AG04449 (cell line): ENCODE measurements at regions of chr1 and their contacts with region 1.

Region 1: GRCh38 chr1:238951809-238952208 is 434.6 kb upstream of the CHRM3 start:
- DNase-seq: no peak
- H3K4me3 ChIP-seq: no peak overlapping the region
- CTCF ChIP-seq: peak; percentile 28

Region 2: GRCh38 chr1:237811633-237812032 is 1140.2 kb before region 1 on chr1:
- CTCF ChIA-PET with region 1: interaction called, 20 read pairs
- POLR2A ChIA-PET with region 1: no interaction called
- DNase-seq: no peak
- H3K4me3 ChIP-seq: no peak overlapping the region
- CTCF ChIP-seq: no peak

Region 3: DNA sequence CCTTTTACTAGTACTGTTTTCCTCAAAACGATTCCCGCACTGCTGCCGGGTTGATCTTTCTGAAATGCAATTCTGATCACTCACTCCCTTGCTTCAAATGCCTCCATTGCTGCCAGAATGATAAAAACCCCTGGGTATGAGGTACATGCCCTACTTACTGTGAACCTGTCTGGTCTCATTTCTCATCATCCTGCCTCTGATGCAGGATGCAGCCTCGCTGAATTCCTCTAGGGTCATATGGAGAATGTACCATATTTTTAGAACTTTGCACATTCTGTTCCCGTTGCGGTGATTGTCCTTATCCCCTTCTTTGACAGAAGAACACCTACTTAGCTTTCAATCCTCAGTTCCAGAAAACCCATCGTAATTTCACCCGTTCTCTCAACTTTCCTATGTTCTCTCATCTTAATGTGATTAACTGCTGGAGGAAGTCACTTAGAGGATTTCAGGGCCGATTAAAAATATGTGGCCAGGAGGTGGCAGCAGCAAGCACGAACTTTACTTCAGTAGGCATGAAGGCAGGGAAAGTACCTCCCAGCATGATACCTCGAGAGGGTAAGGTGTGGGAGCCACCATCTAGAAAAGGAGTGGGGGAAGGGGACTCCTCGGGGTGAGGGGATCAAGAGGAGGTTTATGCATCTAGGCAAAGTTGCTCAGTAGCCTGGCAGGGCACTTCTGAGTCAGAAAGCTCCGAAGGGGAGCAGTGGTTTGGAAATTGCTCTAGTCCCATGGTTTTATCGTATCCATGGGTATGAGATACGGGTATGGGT is 699.6 kb before region 1 on chr1:
- CTCF ChIA-PET with region 1: interaction called, 13 read pairs
- POLR2A ChIA-PET with region 1: no interaction called
- DNase-seq: peak; percentile 5
- H3K4me3 ChIP-seq: no peak overlapping the region
- CTCF ChIP-seq: peak; percentile 36

Region 4: GRCh38 chr1:238861342-238862066 is 90.3 kb before region 1 on chr1:
- CTCF ChIA-PET with region 1: no interaction called
- POLR2A ChIA-PET with region 1: no interaction called
- DNase-seq: no peak
- H3K4me3 ChIP-seq: no peak overlapping the region
- CTCF ChIP-seq: no peak

Region 5: DNA sequence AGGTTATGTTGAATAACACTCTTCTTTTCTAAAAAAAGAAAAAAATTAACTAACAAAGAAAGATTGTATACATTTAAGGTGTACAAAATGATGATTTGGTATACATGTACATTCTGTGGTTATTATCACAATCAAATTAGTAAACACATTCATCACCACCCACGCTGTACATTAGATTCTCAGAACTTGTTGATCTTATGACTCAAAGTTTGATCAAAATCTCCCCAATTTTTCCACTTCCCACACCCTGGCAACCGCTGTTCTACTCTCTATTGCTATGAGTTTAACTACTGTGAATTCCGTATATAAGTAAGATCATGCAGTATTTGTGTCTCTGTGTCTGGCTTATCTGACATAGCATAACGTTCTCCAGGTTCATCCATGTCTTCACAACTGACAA is 35.0 kb before region 1 on chr1:
- CTCF ChIA-PET with region 1: no interaction called
- POLR2A ChIA-PET with region 1: no interaction called
- DNase-seq: no peak
- H3K4me3 ChIP-seq: no peak overlapping the region
- CTCF ChIP-seq: no peak